ENCODE measurements at regions of chr12 and their contacts with region 1.

Region 1: GRCh38 chr12:6752921-6753771 is at the start of gene MLF2:
- DNase-seq: peak; percentile 95
- ATAC-seq: peak; percentile 92
- H3K4me3 ChIP-seq: peak within 1 kb of the TSS; percentile 91
- H3K27ac ChIP-seq: peak within 1 kb of the TSS; percentile 89
- H3K4me1 ChIP-seq: peaks cover 12% of the 10 kb centered on the region
- H3K27me3 ChIP-seq: no peaks in the 10 kb centered on the region
- CTCF ChIP-seq: peak; percentile 88; the same call in 1 of the 2 replicates
- total RNA-seq, gene MLF2: 222 and 248 TPM in 2 replicates

Region 2: DNA sequence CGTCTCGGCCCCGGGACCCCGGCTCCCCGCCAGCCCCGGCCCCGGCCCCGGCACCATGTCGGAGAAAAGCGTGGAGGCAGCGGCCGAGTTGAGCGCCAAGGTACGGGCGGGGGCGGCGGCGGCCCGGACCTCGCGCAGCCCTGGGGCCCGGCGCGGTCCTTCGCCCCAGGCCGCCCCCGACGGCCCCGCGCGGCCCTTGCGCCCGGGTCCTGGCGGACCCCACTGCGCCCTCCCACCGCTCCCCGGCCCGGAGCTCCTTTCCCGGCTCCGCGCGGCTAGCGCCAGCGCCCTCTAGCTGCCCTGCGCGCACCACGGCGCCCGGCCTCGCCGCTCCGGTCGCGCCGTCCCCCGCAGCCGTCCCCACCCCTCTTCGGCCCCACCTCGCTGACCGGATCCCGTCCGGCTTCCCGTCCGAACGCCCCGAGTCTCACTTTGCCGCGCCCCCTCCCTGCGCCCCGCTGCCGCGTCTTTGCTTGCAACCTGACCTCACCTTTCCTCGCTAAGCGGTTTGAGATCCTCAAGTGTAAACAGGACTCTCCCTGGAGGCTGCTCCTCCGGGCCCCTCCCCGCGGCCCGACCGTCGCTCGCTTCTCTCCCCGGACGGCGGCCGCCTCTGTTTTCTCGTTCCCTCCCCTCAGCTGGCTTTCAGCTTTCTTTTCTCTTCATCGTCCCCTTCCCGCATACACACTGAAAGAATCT is 13.7 kb after region 1 on chr12:
- CTCF ChIA-PET with region 1: interaction called, 24 read pairs
- POLR2A ChIA-PET with region 1: interaction called, 14 read pairs
- intact Hi-C with region 1: loop called (anchors 2 kb)
- DNase-seq: peak; percentile 68
- ATAC-seq: peak; percentile 49
- H3K4me3 ChIP-seq: peak overlapping the region; percentile 89
- H3K27ac ChIP-seq: peak overlapping the region; percentile 9; the same call in 1 of the 2 replicates
- H3K4me1 ChIP-seq: peaks cover 36% of the 10 kb centered on the region
- H3K27me3 ChIP-seq: no peaks in the 10 kb centered on the region
- CTCF ChIP-seq: peak; percentile 52